Activated CD8-positive, alpha-beta T cell treated with anti-CD3 and anti-CD28 coated beads for 36 hours (primary cell): ENCODE measurements at regions of chr11 and their contacts with region 1.

Region 1: DNA sequence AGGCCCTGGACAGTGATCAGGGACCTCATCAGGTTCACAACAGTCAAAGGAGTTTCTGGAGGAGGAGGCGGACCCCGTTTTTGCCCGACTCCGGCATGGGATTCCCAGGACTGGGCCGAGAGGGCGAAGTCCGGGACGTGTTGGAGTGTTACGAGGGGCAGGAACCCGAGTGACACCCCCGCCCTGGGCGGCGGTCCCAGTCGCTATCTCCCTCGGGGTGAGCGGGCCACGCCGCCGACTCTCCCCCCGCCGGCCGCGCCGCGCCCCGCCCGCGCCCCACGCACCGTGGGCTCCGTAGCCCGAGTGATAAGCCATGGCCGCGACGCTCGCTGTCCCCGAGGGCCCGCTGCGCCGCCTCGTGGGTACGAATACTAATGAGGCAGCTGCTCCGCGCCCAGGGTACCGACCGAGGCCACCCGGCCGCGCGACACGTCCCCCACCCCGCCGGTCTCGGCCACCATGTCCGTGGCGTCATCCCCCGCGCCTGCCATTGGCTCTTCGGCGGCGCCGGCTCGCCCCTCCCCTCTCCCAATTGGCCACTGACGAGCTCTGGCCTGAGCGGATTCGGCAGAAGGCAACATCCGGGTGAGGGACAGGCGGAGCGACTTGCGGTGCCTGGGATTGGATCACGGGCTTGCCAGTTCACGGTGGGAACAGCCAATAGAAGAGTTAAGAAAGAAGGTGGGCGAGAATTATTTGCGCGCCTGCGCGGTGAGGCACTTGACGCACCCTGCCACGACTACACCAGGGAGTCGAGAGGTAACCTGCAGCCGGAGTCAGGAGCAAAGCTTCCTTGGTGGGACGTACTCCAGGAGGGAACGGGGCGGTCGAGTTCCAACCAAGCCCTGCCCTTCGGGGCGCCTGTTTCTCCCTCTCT is at the start of gene YIF1A:
- DNase-seq: peak; percentile 99
- ATAC-seq: peak; percentile 96
- H3K4me3 Mint-ChIP-seq: peak within 1 kb of the TSS; percentile 85
- H3K27ac Mint-ChIP-seq: peak within 1 kb of the TSS; percentile 89
- H3K4me1 Mint-ChIP-seq: peaks cover 31% of the 10 kb centered on the region
- H3K27me3 Mint-ChIP-seq: peaks cover 17% of the 10 kb centered on the region
- CTCF ChIP-seq: no peak
- total RNA-seq, gene YIF1A: 57.4 to 64.0 TPM

Region 2: DNA sequence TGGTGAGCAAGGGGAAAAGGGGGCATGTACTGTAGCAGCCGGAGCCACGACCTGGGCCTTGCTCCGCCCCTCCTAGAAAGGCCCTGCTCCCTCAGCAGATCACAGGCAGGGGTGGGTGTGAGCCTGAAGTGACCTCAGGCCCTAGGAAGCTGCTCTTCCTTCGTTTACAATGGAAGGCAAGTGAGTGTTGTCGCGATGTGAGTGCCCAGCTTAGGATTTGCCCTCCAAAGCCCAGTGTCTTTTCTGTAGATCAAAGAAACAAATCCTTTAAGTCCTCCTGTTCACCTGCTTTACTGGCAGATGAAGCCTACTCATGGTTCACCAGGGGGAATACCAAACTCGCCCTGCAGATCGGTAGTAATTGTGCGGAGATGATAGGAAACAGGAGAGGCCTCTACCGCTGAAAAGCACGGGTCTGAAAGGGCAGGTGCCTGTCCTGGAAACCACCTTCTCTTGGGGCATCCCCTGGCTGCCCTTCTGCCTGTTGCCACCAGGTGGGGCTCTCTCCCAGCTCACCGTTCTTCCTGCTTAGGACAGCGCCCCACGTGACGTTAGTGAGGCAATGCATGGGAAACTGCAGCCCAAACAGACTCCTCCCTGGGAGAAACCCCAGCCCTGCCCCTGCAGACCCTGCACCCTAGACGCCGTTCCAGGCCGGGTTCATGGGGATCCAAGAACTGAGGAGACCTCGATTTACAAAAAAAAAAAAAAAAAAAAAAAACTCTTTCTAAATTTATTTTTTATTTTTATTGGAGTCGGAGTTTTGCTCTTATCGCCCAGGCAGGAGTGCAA is 66.4 kb before region 1 on chr11:
- CTCF ChIA-PET with region 1: interaction called, 13 read pairs
- POLR2A ChIA-PET with region 1: interaction called, 3 read pairs
- intact Hi-C with region 1: loop called (anchors 5 kb)
- DNase-seq: peak; percentile 97
- ATAC-seq: peak; percentile 97
- H3K4me3 Mint-ChIP-seq: peak overlapping the region; percentile 20
- H3K27ac Mint-ChIP-seq: peak overlapping the region; percentile 97
- H3K4me1 Mint-ChIP-seq: peaks cover 20% of the 10 kb centered on the region
- H3K27me3 Mint-ChIP-seq: no peaks in the 10 kb centered on the region
- CTCF ChIP-seq: peak; percentile 99